Left lung (tissue), 14 donors: ENCODE measurements at regions of chr13 and their contacts with region 1.

Region 1: DNA sequence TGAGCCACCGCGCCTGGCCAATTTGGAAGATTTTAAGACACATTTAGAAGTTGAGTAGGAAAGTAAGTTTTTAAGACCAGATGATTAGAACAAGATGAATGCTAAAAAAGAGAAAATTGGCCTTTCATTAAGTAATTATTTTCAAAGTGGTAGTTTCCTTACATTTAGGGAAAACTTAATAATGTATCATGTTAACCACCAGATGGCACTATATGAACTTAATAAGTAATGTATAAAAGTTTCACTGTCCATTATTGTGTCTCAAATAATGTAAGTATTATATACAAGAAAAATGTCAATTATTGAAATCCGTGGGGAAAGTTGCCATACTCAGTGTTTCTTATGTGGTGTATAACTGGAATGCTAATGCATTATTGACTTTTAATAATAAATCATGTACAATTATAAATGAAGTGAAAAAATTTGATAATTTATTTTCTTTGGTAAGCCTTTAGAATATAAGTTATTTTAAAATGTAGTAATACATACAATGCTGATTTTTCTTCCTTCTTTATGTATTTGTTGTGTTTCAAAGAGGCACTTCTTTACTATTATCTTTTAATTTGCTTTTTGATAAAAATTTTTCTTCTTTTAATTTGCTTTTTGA is 29.2 kb downstream of the COG6 start:
- DNase-seq: peak in 2 of 4 donors; percentile 13 to 29
- ATAC-seq: peak; percentile 61
- H3K4me3 ChIP-seq: no peak overlapping the region
- H3K27ac ChIP-seq: no peak overlapping the region
- H3K4me1 ChIP-seq: no peaks in the 10 kb centered on the region
- H3K27me3 ChIP-seq: no peaks in the 10 kb centered on the region
- CTCF ChIP-seq: peak; percentile 33 to 40

Region 2: DNA sequence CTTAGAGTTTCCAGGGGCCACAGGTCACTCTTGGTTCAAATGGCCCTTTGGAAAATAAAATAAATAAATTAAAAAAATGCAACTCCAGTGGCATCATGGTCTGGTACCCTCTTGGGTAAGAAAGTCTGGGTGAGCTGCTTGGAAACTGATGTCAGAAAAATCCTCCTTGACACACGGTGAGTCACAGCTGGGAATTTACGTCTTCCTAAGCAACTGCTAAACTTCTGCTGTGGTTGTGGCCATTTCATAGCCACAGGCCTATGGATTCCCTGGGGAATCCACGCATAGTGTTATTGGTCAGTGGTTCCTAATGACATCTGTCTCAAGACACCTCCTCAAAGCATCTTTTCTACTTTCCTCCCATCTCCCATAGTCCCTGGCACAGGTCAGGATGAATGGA is 191.6 kb after region 1 on chr13:
- intact Hi-C with region 1: no loop called
- DNase-seq: no peak
- ATAC-seq: no peak
- H3K4me3 ChIP-seq: no peak overlapping the region
- H3K27ac ChIP-seq: no peak overlapping the region
- H3K4me1 ChIP-seq: no peaks in the 10 kb centered on the region
- H3K27me3 ChIP-seq: no peaks in the 10 kb centered on the region
- CTCF ChIP-seq: no peak

Region 3: DNA sequence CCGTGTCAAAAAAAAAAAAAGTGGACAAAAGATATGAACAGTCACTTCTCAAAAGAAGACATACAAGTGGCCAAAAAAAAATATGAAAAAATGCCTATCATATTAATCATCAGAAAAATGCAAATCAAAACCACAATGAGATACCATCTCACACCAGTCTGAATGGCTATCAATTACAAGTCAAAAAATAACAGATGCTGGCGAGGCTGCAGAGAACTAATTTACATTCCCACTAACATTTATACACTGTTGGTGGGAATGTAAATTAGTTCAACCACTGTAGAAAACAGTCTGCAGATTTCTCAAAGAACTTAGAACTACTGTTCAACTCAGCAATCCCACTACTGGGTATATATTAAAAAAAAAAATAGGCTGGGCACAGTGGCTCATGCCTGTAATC is 1008.3 kb after region 1 on chr13:
- intact Hi-C with region 1: loop called in 1 of 2 experiments (anchors 10 kb)
- DNase-seq: no peak
- ATAC-seq: no peak
- H3K4me3 ChIP-seq: no peak overlapping the region
- H3K27ac ChIP-seq: no peak overlapping the region
- H3K4me1 ChIP-seq: no peaks in the 10 kb centered on the region
- H3K27me3 ChIP-seq: no peaks in the 10 kb centered on the region
- CTCF ChIP-seq: no peak